Activated CD4-positive, alpha-beta T cell treated with anti-CD3 and anti-CD28 coated beads, Interleukin-2, amount 10 ng/mL, durations not matched to agents 24 days and 14 days (primary cell): ENCODE measurements at regions of chr6 and their contacts with region 1.

Region 1: GRCh38 chr6:144095331-144096002 is at the start of gene SF3B5:
- DNase-seq: peak; percentile 99
- H3K4me3 Mint-ChIP-seq: peak within 1 kb of the TSS; percentile 95
- H3K27ac Mint-ChIP-seq: peak within 1 kb of the TSS; percentile 92
- H3K4me1 Mint-ChIP-seq: peaks cover 26% of the 10 kb centered on the region
- H3K27me3 Mint-ChIP-seq: peaks cover 2% of the 10 kb centered on the region
- total RNA-seq, gene SF3B5: 214 and 217 TPM in 2 replicates

Region 2: GRCh38 chr6:143575440-143575839 is 520.0 kb before region 1 on chr6:
- intact Hi-C with region 1: loop called (anchors 10 kb)
- DNase-seq: peak; percentile 88
- H3K4me3 Mint-ChIP-seq: no peak overlapping the region
- H3K27ac Mint-ChIP-seq: no peak overlapping the region
- H3K4me1 Mint-ChIP-seq: peaks cover 5% of the 10 kb centered on the region
- H3K27me3 Mint-ChIP-seq: no peaks in the 10 kb centered on the region

Region 3: DNA sequence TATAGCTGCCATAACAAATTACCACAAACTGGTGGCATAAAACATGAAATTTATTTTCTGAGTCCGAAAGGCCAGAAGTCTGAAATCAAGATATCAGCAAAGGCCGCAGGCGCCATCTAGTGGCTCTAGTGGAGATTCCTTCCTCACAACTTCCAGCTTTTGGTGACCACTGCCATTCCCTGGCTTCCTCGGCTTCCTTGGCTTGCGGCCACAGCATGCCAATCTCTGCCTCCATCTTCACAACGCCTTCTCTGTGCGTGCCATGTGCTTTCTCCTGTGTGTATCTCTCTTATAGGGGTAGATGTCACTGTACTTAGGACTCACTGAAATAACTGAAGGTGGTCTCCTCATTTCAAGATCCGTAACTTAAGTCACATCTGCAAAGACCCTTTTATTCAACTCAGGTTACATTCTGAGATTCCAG is 82.0 kb before region 1 on chr6:
- intact Hi-C with region 1: loop called (anchors 5 kb)
- DNase-seq: peak; percentile 87
- H3K4me3 Mint-ChIP-seq: no peak overlapping the region
- H3K27ac Mint-ChIP-seq: no peak overlapping the region
- H3K4me1 Mint-ChIP-seq: peaks cover 12% of the 10 kb centered on the region
- H3K27me3 Mint-ChIP-seq: peaks cover 30% of the 10 kb centered on the region

Region 4: DNA sequence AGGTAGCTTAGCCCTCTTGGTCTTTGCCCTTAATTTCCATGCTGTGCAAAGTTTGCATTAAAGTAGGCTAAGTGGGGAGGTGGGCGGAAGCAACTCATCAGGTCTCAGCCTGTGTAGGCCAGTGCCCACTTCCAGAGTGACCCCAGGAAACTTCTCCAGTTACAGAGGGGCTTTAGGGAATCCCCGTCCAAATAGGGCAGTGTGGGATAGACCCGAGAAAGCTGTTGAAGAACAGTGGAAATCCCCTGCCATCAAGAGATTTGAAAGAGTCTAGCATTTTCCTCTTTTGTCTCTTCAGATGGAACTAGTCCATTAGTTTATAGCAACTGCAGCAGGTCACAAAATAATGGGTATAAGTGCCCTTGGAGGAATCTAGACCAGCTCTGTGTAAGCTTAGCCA is 20.3 kb before region 1 on chr6:
- intact Hi-C with region 1: no loop called
- DNase-seq: no peak
- H3K4me3 Mint-ChIP-seq: no peak overlapping the region
- H3K27ac Mint-ChIP-seq: no peak overlapping the region
- H3K4me1 Mint-ChIP-seq: peaks cover 3% of the 10 kb centered on the region
- H3K27me3 Mint-ChIP-seq: peaks cover 2% of the 10 kb centered on the region

Region 5: GRCh38 chr6:144131248-144131709 is 35.8 kb after region 1 on chr6:
- intact Hi-C with region 1: loop called (anchors 1 kb)
- DNase-seq: no peak
- H3K4me3 Mint-ChIP-seq: peak overlapping the region; percentile 57
- H3K27ac Mint-ChIP-seq: peak overlapping the region; percentile 91
- H3K4me1 Mint-ChIP-seq: peaks cover 19% of the 10 kb centered on the region
- H3K27me3 Mint-ChIP-seq: no peaks in the 10 kb centered on the region

Region 6: GRCh38 chr6:144284783-144285547 is 189.5 kb after region 1 on chr6 and contains the start of gene UTRN:
- intact Hi-C with region 1: loop called (anchors 1 kb)
- DNase-seq: peak; percentile 84
- H3K4me3 Mint-ChIP-seq: peak within 1 kb of the TSS; percentile 91
- H3K27ac Mint-ChIP-seq: peak within 1 kb of the TSS; percentile 88
- H3K4me1 Mint-ChIP-seq: peaks cover 16% of the 10 kb centered on the region
- H3K27me3 Mint-ChIP-seq: peaks cover 39% of the 10 kb centered on the region
- total RNA-seq, gene UTRN: 36.7 and 45.1 TPM in 2 replicates